ENCODE measurements at regions of chr7 and their contacts with region 1.

Region 1: GRCh38 chr7:24819916-24820689 is 62.8 kb upstream of the GSDME start:
- DNase-seq: peak; percentile 45
- ATAC-seq: peak; percentile 56
- H3K4me3 Mint-ChIP-seq: peak overlapping the region; percentile 80
- H3K27ac Mint-ChIP-seq: peak overlapping the region; percentile 94
- H3K4me1 Mint-ChIP-seq: peaks cover 40% of the 10 kb centered on the region
- H3K27me3 Mint-ChIP-seq: no peaks in the 10 kb centered on the region
- CTCF ChIP-seq: peak; percentile 74

Region 2: DNA sequence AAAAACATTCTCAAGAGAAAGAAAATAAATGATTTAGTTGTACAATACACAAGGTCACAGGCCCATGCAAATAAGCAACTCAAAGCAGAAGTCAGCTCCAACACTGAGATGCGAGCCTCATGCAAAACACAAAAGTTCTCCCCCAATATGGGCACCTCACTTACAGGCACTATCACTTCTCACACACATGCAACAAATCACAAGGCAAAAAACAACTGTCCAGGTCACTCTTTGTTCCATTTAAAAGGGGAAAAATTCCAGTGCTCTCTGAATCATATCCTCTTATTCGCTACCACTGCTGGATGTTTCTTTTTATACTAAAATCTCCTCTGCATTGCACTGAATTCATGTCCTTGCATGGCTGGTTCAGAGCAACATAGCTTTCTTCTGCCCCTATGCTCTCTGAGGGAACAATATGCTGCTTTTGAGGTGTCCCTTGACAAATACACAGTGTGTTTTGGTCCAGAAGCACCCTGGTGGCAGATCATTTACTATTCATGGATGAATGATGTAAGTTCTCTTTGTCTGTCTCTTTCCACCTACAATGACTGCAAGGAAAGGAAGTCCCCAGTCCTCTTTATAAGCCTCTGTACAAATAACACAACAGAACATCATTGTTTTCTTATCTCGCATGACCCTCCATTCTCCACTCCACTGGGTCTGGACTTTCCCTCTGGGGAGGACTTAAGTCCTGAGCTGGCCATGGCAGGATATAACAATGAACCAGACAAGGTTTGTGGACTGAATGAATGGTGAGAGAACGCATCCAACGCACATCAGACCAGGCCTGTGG is 22.5 kb after region 1 on chr7:
- CTCF ChIA-PET with region 1: interaction called, 64 read pairs
- POLR2A ChIA-PET with region 1: interaction called, 14 read pairs
- intact Hi-C with region 1: loop called (anchors 1 kb)
- DNase-seq: no peak
- ATAC-seq: peak; percentile 81
- H3K4me3 Mint-ChIP-seq: peak overlapping the region; percentile 50
- H3K27ac Mint-ChIP-seq: peak overlapping the region; percentile 87
- H3K4me1 Mint-ChIP-seq: peaks cover 57% of the 10 kb centered on the region
- H3K27me3 Mint-ChIP-seq: no peaks in the 10 kb centered on the region
- CTCF ChIP-seq: no peak

Region 3: GRCh38 chr7:24896031-24896501 is 76.0 kb after region 1 on chr7:
- CTCF ChIA-PET with region 1: interaction called, 11 read pairs
- POLR2A ChIA-PET with region 1: no interaction called
- intact Hi-C with region 1: loop called (anchors 1 kb)
- DNase-seq: no peak
- ATAC-seq: peak; percentile 69
- H3K4me3 Mint-ChIP-seq: no peak overlapping the region
- H3K27ac Mint-ChIP-seq: peak overlapping the region; percentile 42
- H3K4me1 Mint-ChIP-seq: peaks cover 61% of the 10 kb centered on the region
- H3K27me3 Mint-ChIP-seq: no peaks in the 10 kb centered on the region
- CTCF ChIP-seq: no peak

Region 4: DNA sequence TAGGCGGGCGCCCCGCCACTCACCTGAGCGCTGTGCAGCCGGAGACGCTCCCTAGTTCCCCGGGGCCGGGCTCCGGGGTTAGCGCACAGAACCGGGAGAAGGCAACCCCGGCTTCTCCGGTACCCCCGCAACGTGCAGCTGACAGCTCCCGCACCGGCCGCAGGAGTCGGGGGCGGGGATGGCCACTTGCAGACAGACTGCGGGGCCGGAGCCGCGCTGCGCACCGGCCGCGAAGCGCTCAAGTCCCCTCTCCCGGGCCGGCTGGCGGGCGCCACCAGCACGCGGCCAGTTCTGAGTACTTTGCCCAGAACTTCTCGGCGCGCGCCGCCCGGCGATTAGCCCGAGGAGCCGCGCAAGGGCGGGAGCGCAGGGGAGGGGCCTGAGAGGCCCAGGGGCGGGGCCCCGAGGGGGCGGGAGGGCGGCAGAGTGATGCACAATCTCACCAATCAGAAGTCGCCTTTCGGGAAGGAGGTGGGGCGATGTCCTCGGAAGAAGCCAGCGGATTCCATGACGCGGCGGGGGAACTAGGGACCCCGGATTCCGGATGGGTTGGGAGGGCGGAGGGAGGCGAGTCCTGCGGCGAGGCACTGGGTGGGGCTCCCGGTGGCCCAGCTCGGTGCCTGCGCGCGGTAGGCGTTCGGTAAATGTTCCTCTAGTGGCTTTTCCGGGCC is 159.9 kb after region 1 on chr7 and contains the start of gene OSBPL3:
- CTCF ChIA-PET with region 1: interaction called, 85 read pairs
- POLR2A ChIA-PET with region 1: interaction called, 55 read pairs
- intact Hi-C with region 1: loop called (anchors 1 kb)
- DNase-seq: peak; percentile 92
- ATAC-seq: peak; percentile 90
- H3K4me3 Mint-ChIP-seq: peak within 1 kb of the TSS; percentile 98
- H3K27ac Mint-ChIP-seq: peak within 1 kb of the TSS; percentile 94
- H3K4me1 Mint-ChIP-seq: peaks cover 53% of the 10 kb centered on the region
- H3K27me3 Mint-ChIP-seq: no peaks in the 10 kb centered on the region
- CTCF ChIP-seq: no peak
- total RNA-seq, gene OSBPL3: 29.3 and 33.3 TPM in 2 replicates

Region 5: DNA sequence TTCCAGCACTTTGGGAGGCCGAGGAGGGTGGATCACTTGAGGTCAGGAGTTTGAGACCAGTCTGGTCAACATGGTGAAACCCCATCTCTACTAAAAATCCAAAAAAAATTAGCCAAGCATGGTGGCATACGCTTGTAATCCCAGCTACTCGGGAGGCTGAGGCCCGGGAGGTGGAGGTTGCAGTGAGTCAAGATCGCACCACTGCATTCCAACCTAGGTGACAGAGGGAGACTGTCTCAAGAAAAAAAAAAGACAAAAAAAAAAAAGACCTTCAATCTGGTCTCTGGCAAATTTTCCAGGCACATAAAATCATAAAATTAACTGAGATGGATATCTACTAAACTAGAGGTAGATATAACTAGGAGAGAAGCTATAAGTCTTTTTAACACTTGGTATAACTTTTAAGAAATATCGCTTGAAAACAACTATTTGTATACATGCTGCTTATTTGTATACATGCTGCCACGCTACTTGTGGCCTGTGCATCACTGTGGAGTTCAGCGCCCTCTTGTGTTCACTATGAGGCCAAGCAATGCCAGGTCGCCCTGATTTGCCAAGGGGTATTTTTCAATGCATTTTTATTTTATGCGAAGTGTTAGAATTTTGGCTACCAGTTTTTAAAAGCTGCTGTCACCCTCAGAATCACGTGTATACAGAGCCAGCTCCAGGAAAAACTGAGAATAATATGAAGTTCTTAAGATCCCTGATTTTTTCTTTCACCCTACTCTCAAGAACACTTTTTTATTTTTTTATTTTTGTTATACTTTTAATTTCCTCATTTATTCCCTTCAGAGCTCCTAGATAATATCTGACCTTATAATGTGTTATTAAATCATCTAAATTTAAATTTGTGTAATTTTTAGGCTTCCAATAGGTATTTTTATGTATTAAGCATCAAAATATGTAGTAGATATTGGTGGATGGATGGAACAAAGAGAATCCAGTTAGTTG is 278.3 kb after region 1 on chr7:
- CTCF ChIA-PET with region 1: interaction called, 213 read pairs
- POLR2A ChIA-PET with region 1: interaction called, 4 read pairs
- intact Hi-C with region 1: loop called (anchors 1 kb)
- DNase-seq: no peak
- ATAC-seq: peak; percentile 87
- H3K4me3 Mint-ChIP-seq: no peak overlapping the region
- H3K27ac Mint-ChIP-seq: no peak overlapping the region
- H3K4me1 Mint-ChIP-seq: peaks cover 5% of the 10 kb centered on the region
- H3K27me3 Mint-ChIP-seq: peaks cover 3% of the 10 kb centered on the region
- CTCF ChIP-seq: peak; percentile 31

Measured in activated B cell treated with CpG ODN at 0.5 μM for 24 hours (primary cell).